Ovary (tissue), 10 donors: ENCODE measurements at regions of chr11 and their contacts with region 1.

Region 1: DNA sequence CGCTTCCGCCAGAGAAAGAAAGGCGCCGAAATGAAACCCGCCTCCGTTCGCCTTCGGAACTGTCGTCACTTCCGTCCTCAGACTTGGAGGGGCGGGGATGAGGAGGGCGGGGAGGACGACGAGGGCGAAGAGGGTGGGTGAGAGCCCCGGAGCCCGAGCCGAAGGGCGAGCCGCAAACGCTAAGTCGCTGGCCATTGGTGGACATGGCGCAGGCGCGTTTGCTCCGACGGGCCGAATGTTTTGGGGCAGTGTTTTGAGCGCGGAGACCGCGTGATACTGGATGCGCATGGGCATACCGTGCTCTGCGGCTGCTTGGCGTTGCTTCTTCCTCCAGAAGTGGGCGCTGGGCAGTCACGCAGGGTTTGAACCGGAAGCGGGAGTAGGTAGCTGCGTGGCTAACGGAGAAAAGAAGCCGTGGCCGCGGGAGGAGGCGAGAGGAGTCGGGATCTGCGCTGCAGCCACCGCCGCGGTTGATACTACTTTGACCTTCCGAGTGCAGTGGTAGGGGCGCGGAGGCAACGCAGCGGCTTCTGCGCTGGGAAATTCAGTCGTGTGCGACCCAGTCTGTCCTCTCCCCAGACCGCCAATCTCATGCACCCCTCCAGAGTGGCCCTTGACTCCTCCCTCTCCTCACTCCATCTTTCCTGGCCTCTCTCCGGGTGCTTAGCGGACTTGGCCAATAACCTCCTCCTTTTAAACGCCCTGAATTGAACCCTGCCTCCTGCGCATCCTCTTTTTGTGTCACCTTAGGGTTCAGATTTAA is at the start of gene ATM:
- DNase-seq: peak; percentile 99 to 100 (median 99)
- H3K4me3 ChIP-seq: peak within 1 kb of the TSS; percentile 92
- H3K27ac ChIP-seq: peak within 1 kb of the TSS; percentile 56 to 95
- H3K4me1 ChIP-seq: peaks cover 5% of the 10 kb centered on the region
- H3K27me3 ChIP-seq: no peaks in the 10 kb centered on the region
- CTCF ChIP-seq: peak; percentile 69 to 87 (median 81)
- EP300 ChIP-seq: no peak
- POLR2A ChIP-seq: peak; percentile 40
- total RNA-seq, gene ATM: 55.1 to 104 (median 82.7) TPM

Region 2: GRCh38 chr11:107947904-107948303 is 275.0 kb before region 1 on chr11:
- intact Hi-C with region 1: no loop called
- DNase-seq: no peak
- H3K4me3 ChIP-seq: no peak overlapping the region
- H3K27ac ChIP-seq: no peak overlapping the region
- H3K4me1 ChIP-seq: no peaks in the 10 kb centered on the region
- H3K27me3 ChIP-seq: no peaks in the 10 kb centered on the region
- CTCF ChIP-seq: no peak
- EP300 ChIP-seq: no peak
- POLR2A ChIP-seq: no peak

Region 3: DNA sequence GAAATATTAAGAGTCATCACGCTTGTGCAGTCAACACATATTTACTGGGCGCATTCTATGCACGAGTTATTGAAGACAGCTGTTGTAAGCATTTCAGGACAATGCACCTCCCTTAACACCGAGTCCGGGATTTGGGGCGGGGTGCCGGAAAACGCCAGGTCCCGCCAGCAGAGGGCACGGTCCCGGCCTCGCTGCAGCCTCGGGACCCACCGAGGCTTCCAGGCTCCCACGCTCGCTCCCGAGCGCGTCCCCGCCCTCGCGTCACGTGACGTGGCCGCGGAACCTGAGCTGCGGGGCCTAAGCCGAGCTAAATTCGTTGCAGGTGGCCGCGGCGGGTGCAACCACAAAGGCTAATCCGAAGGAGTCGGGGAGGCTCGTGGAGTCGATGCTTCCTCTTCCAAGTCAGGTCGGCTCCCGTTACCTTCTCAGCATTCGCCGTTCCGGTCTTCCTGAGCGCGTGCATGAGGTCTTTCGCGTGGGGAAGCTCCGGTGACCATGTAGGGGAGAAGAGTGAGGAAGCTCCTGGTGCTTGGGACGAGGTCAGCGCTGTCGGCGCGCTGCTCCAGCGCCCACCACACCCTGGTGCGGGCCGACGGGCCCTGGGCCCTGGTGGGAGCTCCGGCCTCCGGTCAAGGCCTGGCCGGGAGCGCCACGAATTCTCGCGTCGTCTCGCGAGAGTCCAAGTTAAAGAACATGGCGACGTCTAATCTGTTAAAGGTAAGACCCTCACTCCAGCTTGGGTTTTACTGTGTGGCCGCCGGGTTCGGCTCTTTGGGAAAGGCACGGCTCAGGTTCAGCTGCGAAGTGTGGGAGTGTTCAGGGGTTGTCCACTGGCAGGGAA is 214.0 kb before region 1 on chr11 and contains the start of gene CUL5:
- intact Hi-C with region 1: loop called in 1 of 4 experiments (anchors 5 kb)
- DNase-seq: peak; percentile 90 to 95 (median 93)
- H3K4me3 ChIP-seq: peak within 1 kb of the TSS; percentile 97
- H3K27ac ChIP-seq: peak within 1 kb of the TSS; percentile 92 to 94
- H3K4me1 ChIP-seq: peaks cover 2% of the 10 kb centered on the region
- H3K27me3 ChIP-seq: no peaks in the 10 kb centered on the region
- CTCF ChIP-seq: peak; percentile 85 to 92 (median 87)
- EP300 ChIP-seq: no peak
- POLR2A ChIP-seq: peak; percentile 44
- total RNA-seq, gene CUL5: 18.4 to 34.4 (median 31.7) TPM

Region 4: DNA sequence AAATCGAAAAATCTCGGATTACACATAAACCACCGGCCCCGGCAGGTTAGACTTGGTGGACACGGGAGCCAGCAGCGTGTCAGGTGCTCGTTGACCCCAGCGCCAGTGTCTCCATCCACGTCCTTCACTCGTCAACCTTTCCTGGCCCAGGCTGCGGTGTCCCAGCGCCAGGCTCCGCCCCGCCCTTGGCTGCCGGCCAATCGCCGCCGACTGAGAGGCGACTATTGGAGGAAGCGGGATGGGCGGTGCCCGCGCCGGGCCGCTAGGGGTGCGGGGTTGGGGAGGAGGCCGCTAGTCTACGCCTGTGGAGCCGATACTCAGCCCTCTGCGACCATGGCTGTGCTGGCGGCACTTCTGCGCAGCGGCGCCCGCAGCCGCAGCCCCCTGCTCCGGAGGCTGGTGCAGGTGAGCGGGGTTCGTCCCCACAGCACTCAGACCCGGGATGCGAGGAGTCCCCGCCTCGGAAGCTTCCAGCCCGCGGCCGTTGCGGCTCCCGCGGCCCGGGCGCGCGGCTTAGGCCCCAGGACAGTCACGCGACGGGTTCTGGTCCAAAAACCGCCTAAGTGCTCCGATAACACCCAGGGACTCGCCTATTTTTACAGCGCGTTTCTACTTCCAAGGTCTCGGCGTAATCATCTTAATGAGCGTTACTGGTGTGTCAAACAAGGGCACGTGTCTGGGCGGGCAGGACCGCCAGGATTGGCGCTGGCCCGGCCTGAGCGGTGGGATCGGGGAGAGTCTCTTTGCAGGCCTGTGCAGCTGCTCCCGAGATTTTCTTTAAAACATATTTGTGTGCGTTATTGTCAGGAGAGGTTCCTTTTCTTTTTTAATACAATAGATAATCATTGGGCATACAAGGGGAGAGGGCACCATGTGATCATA is 101.4 kb before region 1 on chr11 and contains the start of gene ACAT1:
- intact Hi-C with region 1: loop called in 2 of 4 experiments (anchors 5 to 10 kb)
- DNase-seq: peak; percentile 97 to 98 (median 98)
- H3K4me3 ChIP-seq: peak within 1 kb of the TSS; percentile 85
- H3K27ac ChIP-seq: peak within 1 kb of the TSS; percentile 69 to 94
- H3K4me1 ChIP-seq: peaks cover 8% of the 10 kb centered on the region
- H3K27me3 ChIP-seq: no peaks in the 10 kb centered on the region
- CTCF ChIP-seq: peak; percentile 38 to 80 (median 75)
- EP300 ChIP-seq: no peak
- POLR2A ChIP-seq: peak; percentile 84
- total RNA-seq, gene ACAT1: 50.0 to 84.4 (median 74.6) TPM

Region 5: GRCh38 chr11:108467091-108467823 is 244.4 kb after region 1 on chr11 and contains the start of gene C11orf65:
- intact Hi-C with region 1: loop called in 1 of 4 experiments (anchors 10 kb)
- DNase-seq: peak; percentile 96 to 98 (median 97)
- H3K4me3 ChIP-seq: peak within 1 kb of the TSS; percentile 62
- H3K27ac ChIP-seq: peak within 1 kb of the TSS; percentile 88 to 97
- H3K4me1 ChIP-seq: peaks cover 4% of the 10 kb centered on the region
- H3K27me3 ChIP-seq: no peaks in the 10 kb centered on the region
- CTCF ChIP-seq: peak in 1 of 3 donors; percentile 26
- EP300 ChIP-seq: no peak
- POLR2A ChIP-seq: peak; percentile 99
- total RNA-seq, gene C11orf65: 0.62 to 1.2 (median 0.83) TPM

Region 6: DNA sequence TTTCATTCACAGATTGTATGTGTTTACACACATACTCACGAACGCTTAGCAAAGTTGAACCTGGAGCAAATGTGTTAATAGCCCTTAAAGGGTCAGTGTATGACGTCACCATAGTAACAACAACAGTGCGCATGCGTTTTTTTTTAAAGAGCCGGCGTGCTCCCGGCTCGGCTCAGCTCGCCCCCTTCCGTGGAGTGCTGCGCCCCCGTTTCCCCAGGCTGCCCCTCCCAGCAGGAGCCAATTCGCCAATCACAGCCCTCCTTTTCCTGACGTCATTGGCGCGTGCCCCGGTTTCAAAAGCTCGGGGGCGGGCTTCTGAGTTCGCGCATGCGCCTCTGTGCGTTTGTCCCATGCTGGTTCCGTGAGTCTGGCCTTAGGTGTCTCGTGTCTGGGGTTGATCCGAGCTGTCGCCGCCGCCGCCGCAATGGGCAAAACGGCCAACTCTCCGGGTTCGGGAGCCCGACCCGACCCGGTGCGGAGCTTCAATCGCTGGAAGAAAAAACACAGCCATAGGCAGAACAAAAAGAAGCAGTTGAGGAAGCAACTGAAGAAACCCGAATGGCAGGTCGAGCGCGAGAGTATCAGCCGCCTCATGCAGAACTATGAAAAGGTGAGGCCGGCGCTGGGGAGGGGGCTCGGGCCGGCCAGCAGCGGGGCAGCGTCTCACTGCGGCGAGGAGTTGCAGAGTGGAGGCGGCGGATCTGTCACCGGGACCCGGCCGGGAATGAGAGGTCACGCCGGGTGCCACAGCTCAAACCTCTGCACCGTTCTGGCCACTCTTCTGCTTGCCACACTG is 442.1 kb after region 1 on chr11 and contains the start of gene DDX10:
- intact Hi-C with region 1: loop called in 1 of 4 experiments (anchors 5 kb)
- DNase-seq: peak; percentile 98 to 99 (median 99)
- H3K4me3 ChIP-seq: peak within 1 kb of the TSS; percentile 54
- H3K27ac ChIP-seq: no peak within 1 kb of the TSS
- H3K4me1 ChIP-seq: peaks cover 16% of the 10 kb centered on the region
- H3K27me3 ChIP-seq: no peaks in the 10 kb centered on the region
- CTCF ChIP-seq: peak in 1 of 3 donors; percentile 40
- EP300 ChIP-seq: no peak
- POLR2A ChIP-seq: no peak
- total RNA-seq, gene DDX10: 13.1 to 34.3 (median 26.4) TPM